A673 (cell line): ENCODE measurements at regions of chr1 and their contacts with region 1.

Region 1: GRCh38 chr1:15323351-15323988 is 76.4 kb downstream of the FHAD1 start:
- DNase-seq: peak; percentile 86
- H3K4me3 ChIP-seq: no peak overlapping the region
- H3K27ac ChIP-seq: no peak overlapping the region
- H3K4me1 ChIP-seq: peaks cover 41% of the 10 kb centered on the region
- H3K27me3 ChIP-seq: no peaks in the 10 kb centered on the region
- CTCF ChIP-seq: peak; percentile 99

Region 2: DNA sequence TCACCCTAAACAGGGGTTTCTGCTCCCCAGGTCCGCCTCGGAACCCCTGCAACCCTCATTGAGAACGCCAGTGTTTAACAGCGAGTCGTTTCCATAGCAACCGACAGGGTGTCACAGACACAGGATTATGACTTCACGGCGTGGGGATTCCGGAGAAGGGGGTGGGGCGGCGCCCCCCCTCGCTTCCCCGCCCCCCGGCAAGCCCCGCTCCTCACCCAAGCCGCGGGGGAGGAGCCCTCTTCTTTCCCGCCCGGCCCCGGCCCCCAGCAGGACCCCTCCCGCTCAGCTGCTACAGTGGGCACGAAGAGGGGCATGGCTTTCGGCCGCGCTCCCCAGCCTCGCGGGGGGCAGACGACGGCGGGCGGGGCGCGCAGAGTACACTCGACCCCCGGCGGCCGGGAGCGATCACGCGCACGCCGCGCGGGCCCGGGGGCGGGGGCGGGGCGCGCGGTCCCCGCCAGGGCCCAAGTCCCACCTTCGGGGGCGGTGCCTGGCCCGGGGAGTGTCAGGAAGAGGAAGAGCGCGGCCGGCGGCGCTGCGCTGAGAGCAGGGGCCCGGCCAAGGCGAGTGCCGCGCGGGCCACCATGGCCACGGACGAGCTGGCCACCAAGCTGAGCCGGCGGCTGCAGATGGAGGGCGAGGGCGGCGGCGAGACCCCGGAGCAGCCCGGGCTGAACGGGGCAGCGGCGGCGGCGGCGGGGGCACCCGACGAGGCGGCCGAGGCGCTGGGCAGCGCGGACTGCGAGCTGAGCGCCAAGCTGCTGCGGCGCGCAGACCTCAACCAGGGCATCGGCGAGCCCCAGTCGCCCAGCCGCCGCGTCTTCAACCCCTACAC is 86.1 kb after region 1 on chr1 and contains the start of gene EFHD2:
- CTCF ChIA-PET with region 1: no interaction called
- POLR2A ChIA-PET with region 1: no interaction called
- intact Hi-C with region 1: loop called (anchors 5 kb)
- DNase-seq: peak; percentile 93
- H3K4me3 ChIP-seq: peak within 1 kb of the TSS; percentile 96
- H3K27ac ChIP-seq: peak within 1 kb of the TSS; percentile 78
- H3K4me1 ChIP-seq: peaks cover 13% of the 10 kb centered on the region
- H3K27me3 ChIP-seq: no peaks in the 10 kb centered on the region
- CTCF ChIP-seq: no peak
- total RNA-seq, gene EFHD2: 30.6 and 32.5 TPM in 2 replicates

Region 3: GRCh38 chr1:15430787-15431570 is 107.5 kb after region 1 on chr1:
- CTCF ChIA-PET with region 1: interaction called, 29 read pairs
- POLR2A ChIA-PET with region 1: no interaction called
- intact Hi-C with region 1: loop called (anchors 1 kb)
- DNase-seq: peak; percentile 60
- H3K4me3 ChIP-seq: no peak overlapping the region
- H3K27ac ChIP-seq: no peak overlapping the region
- H3K4me1 ChIP-seq: no peaks in the 10 kb centered on the region
- H3K27me3 ChIP-seq: no peaks in the 10 kb centered on the region
- CTCF ChIP-seq: peak; percentile 95

Region 4: DNA sequence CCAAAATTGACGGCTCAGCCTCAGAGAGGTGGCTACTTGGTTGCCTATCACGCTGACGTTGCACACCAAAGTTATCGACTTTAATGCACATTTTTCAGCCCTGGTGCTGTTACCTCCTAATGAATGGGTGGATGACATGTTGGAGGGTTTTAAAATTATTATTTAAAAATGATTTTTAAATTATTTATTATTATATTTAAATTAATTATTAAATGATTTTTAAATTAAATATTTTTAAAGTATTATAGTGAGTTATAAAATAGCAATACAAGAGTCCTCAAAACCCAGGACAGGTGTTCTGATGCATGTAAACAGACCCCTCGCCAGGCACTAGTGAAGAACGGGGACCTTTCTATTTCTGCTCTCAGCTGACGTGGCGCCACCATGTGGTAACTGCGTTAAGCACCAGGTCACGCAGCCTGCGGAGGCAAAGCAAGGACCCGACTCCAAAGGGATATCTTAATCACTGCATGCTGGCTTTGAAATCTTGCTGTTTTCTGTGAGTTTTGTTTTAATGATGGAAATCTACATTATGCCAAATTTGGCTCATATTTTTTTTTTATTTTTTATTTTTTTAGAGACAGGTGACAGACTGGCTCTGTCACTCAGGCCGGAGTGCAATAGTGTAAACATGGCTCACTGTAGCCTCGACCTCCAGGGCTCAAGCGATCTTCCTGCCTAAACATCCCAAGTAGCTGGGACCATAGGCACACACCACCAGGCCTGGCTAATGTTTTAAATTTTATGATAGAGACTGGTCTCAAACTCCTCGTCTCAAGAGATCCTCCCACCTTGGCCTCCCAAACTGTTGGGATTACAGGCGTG is 177.9 kb after region 1 on chr1:
- CTCF ChIA-PET with region 1: no interaction called
- POLR2A ChIA-PET with region 1: no interaction called
- intact Hi-C with region 1: loop called (anchors 5 kb)
- DNase-seq: peak; percentile 73
- H3K4me3 ChIP-seq: no peak overlapping the region
- H3K27ac ChIP-seq: no peak overlapping the region
- H3K4me1 ChIP-seq: no peaks in the 10 kb centered on the region
- H3K27me3 ChIP-seq: no peaks in the 10 kb centered on the region
- CTCF ChIP-seq: peak; percentile 89